CD4-positive, alpha-beta T cell (primary cell): ENCODE measurements at regions of chr11 and their contacts with region 1.

Region 1: GRCh38 chr11:3797329-3798095 is at the start of gene NUP98:
- DNase-seq: peak; percentile 98 to 100 (median 99)
- ATAC-seq: peak; percentile 93
- H3K4me3 ChIP-seq: peak within 1 kb of the TSS; percentile 98
- H3K4me3 Mint-ChIP-seq: peak within 1 kb of the TSS; percentile 89
- H3K27ac ChIP-seq: peak within 1 kb of the TSS; percentile 95
- H3K27ac Mint-ChIP-seq: peak within 1 kb of the TSS; percentile 97
- H3K4me1 ChIP-seq: peaks cover 37% of the 10 kb centered on the region
- H3K4me1 Mint-ChIP-seq: peaks cover 46% of the 10 kb centered on the region
- H3K27me3 ChIP-seq: no peaks in the 10 kb centered on the region
- H3K27me3 Mint-ChIP-seq: no peaks in the 10 kb centered on the region
- CTCF ChIP-seq: no peak
- total RNA-seq, gene NUP98: 161 to 186 TPM

Region 2: DNA sequence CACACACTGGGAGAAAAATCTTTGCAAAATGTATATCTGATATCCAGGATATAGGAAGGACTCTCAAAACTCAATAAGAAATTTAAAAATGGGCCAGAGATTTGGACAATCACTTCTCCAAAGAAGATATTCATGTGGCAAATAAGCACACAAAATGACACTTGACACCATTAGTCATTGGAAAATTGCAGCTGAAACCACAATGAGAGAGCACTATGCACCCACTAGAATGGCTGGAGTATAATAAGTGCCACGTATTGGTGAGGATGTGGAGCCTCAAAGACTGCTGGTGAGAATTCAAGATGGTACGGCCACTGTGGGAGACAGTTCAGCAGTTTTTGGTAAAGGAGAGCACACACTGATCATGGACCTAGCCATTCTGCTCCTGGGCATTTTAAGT is 619.6 kb before region 1 on chr11:
- CTCF ChIA-PET with region 1: no interaction called
- POLR2A ChIA-PET with region 1: no interaction called
- intact Hi-C with region 1: no loop called
- DNase-seq: no peak
- ATAC-seq: no peak
- H3K4me3 ChIP-seq: no peak overlapping the region
- H3K4me3 Mint-ChIP-seq: no peak overlapping the region
- H3K27ac ChIP-seq: no peak overlapping the region
- H3K27ac Mint-ChIP-seq: no peak overlapping the region
- H3K4me1 ChIP-seq: no peaks in the 10 kb centered on the region
- H3K4me1 Mint-ChIP-seq: no peaks in the 10 kb centered on the region
- H3K27me3 ChIP-seq: no peaks in the 10 kb centered on the region
- H3K27me3 Mint-ChIP-seq: peaks cover 9% of the 10 kb centered on the region
- CTCF ChIP-seq: no peak

Region 3: GRCh38 chr11:3709977-3710376 is 87.5 kb before region 1 on chr11:
- CTCF ChIA-PET with region 1: no interaction called
- POLR2A ChIA-PET with region 1: no interaction called
- intact Hi-C with region 1: no loop called
- DNase-seq: no peak
- ATAC-seq: no peak
- H3K4me3 ChIP-seq: no peak overlapping the region
- H3K4me3 Mint-ChIP-seq: no peak overlapping the region
- H3K27ac ChIP-seq: no peak overlapping the region
- H3K27ac Mint-ChIP-seq: no peak overlapping the region
- H3K4me1 ChIP-seq: no peaks in the 10 kb centered on the region
- H3K4me1 Mint-ChIP-seq: no peaks in the 10 kb centered on the region
- H3K27me3 ChIP-seq: no peaks in the 10 kb centered on the region
- H3K27me3 Mint-ChIP-seq: no peaks in the 10 kb centered on the region
- CTCF ChIP-seq: no peak

Region 4: GRCh38 chr11:3735827-3736226 is 61.7 kb before region 1 on chr11:
- CTCF ChIA-PET with region 1: no interaction called
- POLR2A ChIA-PET with region 1: no interaction called
- intact Hi-C with region 1: loop called in 1 of 2 experiments (anchors 10 kb)
- DNase-seq: no peak
- ATAC-seq: no peak
- H3K4me3 ChIP-seq: no peak overlapping the region
- H3K4me3 Mint-ChIP-seq: no peak overlapping the region
- H3K27ac ChIP-seq: no peak overlapping the region
- H3K27ac Mint-ChIP-seq: no peak overlapping the region
- H3K4me1 ChIP-seq: no peaks in the 10 kb centered on the region
- H3K4me1 Mint-ChIP-seq: peaks cover 12% of the 10 kb centered on the region
- H3K27me3 ChIP-seq: no peaks in the 10 kb centered on the region
- H3K27me3 Mint-ChIP-seq: no peaks in the 10 kb centered on the region
- CTCF ChIP-seq: no peak

Region 5: DNA sequence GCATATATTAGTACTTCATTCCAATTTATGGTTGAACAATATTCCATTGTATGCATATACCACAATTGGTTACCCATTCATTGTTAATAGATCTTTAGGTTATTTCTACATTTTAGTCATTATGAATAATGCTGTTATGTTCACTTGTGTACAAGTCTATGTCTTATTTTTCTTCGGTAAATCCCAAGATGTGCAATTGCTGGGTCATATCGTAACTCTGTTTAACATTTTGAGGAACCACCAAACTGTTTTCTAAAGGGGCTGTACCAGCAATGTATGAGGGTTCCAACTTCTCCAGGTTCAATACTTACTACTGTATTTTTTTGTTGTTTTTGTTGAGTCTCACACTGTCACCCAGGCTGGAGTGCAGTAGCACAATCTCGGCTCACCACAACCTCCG is 33.2 kb before region 1 on chr11:
- CTCF ChIA-PET with region 1: no interaction called
- POLR2A ChIA-PET with region 1: no interaction called
- intact Hi-C with region 1: no loop called
- DNase-seq: no peak
- ATAC-seq: no peak
- H3K4me3 ChIP-seq: no peak overlapping the region
- H3K4me3 Mint-ChIP-seq: no peak overlapping the region
- H3K27ac ChIP-seq: no peak overlapping the region
- H3K27ac Mint-ChIP-seq: peak overlapping the region; percentile 39
- H3K4me1 ChIP-seq: no peaks in the 10 kb centered on the region
- H3K4me1 Mint-ChIP-seq: no peaks in the 10 kb centered on the region
- H3K27me3 ChIP-seq: no peaks in the 10 kb centered on the region
- H3K27me3 Mint-ChIP-seq: no peaks in the 10 kb centered on the region
- CTCF ChIP-seq: no peak

Region 6: DNA sequence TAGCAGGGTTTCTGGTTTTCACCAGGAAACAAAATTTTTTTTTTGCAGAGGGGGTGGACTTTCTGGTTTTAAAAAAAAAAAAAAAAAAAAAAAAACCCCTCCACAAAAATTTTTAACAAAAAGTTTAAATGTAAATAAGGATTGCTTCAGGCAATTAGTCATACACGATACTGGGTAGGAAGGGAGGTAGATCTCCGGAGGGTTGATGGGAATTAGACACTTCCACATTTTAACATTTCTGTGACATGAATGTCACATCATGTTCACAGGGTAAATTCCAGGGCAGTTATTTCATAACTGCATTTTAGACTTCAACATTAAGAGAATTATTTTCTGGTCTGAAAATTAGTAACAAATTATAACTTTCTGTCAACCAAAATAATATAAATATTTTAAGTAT is 16.1 kb before region 1 on chr11:
- CTCF ChIA-PET with region 1: interaction called, 7 read pairs
- POLR2A ChIA-PET with region 1: interaction called, 25 read pairs
- intact Hi-C with region 1: loop called in 1 of 2 experiments (anchors 1 kb)
- DNase-seq: peak in 2 of 14 experiments; percentile 51 to 61
- ATAC-seq: no peak
- H3K4me3 ChIP-seq: no peak overlapping the region
- H3K4me3 Mint-ChIP-seq: no peak overlapping the region
- H3K27ac ChIP-seq: no peak overlapping the region
- H3K27ac Mint-ChIP-seq: peak overlapping the region; percentile 47
- H3K4me1 ChIP-seq: peaks cover 27% of the 10 kb centered on the region
- H3K4me1 Mint-ChIP-seq: peaks cover 50% of the 10 kb centered on the region
- H3K27me3 ChIP-seq: no peaks in the 10 kb centered on the region
- H3K27me3 Mint-ChIP-seq: no peaks in the 10 kb centered on the region
- CTCF ChIP-seq: no peak

Region 7: DNA sequence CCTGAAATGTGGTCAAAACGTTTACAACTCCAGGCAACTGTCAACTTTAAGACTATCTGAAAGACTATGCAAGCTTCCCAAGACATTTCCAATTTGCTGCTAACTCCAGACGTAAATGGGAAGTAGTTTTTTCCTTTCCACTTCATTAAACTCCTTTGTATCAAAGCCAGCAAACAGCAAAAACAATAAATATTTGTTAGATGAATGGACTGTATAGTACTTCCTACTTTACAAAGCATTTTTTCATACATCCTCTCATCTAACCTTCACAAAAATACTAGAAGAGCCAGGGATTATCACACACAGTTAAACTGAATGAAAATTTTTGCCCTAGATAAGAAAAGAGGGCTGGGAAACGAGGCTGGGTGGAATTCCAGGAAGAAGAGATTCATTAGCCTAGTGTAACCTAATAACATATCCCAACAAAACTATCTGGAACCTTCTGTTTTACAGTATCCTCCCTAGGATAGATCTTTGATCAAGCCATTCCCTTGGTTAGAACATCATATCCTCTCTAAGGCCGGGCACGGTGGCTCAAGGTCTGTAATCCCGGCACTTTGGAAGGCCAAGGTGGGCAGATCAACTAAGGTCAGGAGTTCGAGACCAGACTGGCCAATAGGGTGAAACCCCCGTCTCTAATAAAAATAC is 10.6 kb before region 1 on chr11:
- CTCF ChIA-PET with region 1: interaction called, 7 read pairs
- POLR2A ChIA-PET with region 1: interaction called, 25 read pairs
- intact Hi-C with region 1: loop called in 1 of 2 experiments (anchors 1 kb)
- DNase-seq: no peak
- ATAC-seq: no peak
- H3K4me3 ChIP-seq: no peak overlapping the region
- H3K4me3 Mint-ChIP-seq: peak overlapping the region; percentile 22
- H3K27ac ChIP-seq: peak overlapping the region in 1 of 2 donors; percentile 23
- H3K27ac Mint-ChIP-seq: peak overlapping the region; percentile 85
- H3K4me1 ChIP-seq: peaks cover 52% of the 10 kb centered on the region
- H3K4me1 Mint-ChIP-seq: peaks cover 73% of the 10 kb centered on the region
- H3K27me3 ChIP-seq: no peaks in the 10 kb centered on the region
- H3K27me3 Mint-ChIP-seq: no peaks in the 10 kb centered on the region
- CTCF ChIP-seq: no peak

Region 8: GRCh38 chr11:3834664-3835461 is 37.4 kb after region 1 on chr11:
- CTCF ChIA-PET with region 1: no interaction called
- POLR2A ChIA-PET with region 1: interaction called, 67 read pairs
- intact Hi-C with region 1: loop called (anchors 2 to 5 kb)
- DNase-seq: peak in 2 of 14 experiments; percentile 41 to 46
- ATAC-seq: no peak
- H3K4me3 ChIP-seq: peak overlapping the region; percentile 15
- H3K4me3 Mint-ChIP-seq: peak overlapping the region; percentile 77
- H3K27ac ChIP-seq: peak overlapping the region; percentile 8 to 47
- H3K27ac Mint-ChIP-seq: peak overlapping the region; percentile 95
- H3K4me1 ChIP-seq: peaks cover 92% of the 10 kb centered on the region
- H3K4me1 Mint-ChIP-seq: peaks cover 88% of the 10 kb centered on the region
- H3K27me3 ChIP-seq: no peaks in the 10 kb centered on the region
- H3K27me3 Mint-ChIP-seq: no peaks in the 10 kb centered on the region
- CTCF ChIP-seq: no peak